ENCODE measurements at regions of chr17 and their contacts with region 1.

Region 1: GRCh38 chr17:7523033-7523432 is 25.8 kb upstream of the TNFSF12 start:
- DNase-seq: no peak
- H3K4me3 ChIP-seq: no peak overlapping the region
- H3K27ac ChIP-seq: no peak overlapping the region
- H3K4me1 ChIP-seq: no peaks in the 10 kb centered on the region
- H3K27me3 ChIP-seq: no peaks in the 10 kb centered on the region
- CTCF ChIP-seq: peak; percentile 52

Region 2: GRCh38 chr17:7408863-7409262 is 114.2 kb before region 1 on chr17:
- CTCF ChIA-PET with region 1: no interaction called
- POLR2A ChIA-PET with region 1: no interaction called
- intact Hi-C with region 1: no loop called
- DNase-seq: no peak
- H3K4me3 ChIP-seq: no peak overlapping the region
- H3K27ac ChIP-seq: no peak overlapping the region
- H3K4me1 ChIP-seq: no peaks in the 10 kb centered on the region; the same call in 1 of the 2 replicates
- H3K27me3 ChIP-seq: no peaks in the 10 kb centered on the region
- CTCF ChIP-seq: no peak

Region 3: GRCh38 chr17:7502987-7503386 is 20.0 kb before region 1 on chr17:
- CTCF ChIA-PET with region 1: interaction called, 15 read pairs
- POLR2A ChIA-PET with region 1: interaction called, 8 read pairs
- intact Hi-C with region 1: no loop called
- DNase-seq: no peak
- H3K4me3 ChIP-seq: no peak overlapping the region
- H3K27ac ChIP-seq: no peak overlapping the region
- H3K4me1 ChIP-seq: no peaks in the 10 kb centered on the region
- H3K27me3 ChIP-seq: no peaks in the 10 kb centered on the region
- CTCF ChIP-seq: peak; percentile 31; the same call in 1 of the 2 replicates